PC-9 (cell line): ENCODE measurements at regions of chr5 and their contacts with region 1.

Region 1: DNA sequence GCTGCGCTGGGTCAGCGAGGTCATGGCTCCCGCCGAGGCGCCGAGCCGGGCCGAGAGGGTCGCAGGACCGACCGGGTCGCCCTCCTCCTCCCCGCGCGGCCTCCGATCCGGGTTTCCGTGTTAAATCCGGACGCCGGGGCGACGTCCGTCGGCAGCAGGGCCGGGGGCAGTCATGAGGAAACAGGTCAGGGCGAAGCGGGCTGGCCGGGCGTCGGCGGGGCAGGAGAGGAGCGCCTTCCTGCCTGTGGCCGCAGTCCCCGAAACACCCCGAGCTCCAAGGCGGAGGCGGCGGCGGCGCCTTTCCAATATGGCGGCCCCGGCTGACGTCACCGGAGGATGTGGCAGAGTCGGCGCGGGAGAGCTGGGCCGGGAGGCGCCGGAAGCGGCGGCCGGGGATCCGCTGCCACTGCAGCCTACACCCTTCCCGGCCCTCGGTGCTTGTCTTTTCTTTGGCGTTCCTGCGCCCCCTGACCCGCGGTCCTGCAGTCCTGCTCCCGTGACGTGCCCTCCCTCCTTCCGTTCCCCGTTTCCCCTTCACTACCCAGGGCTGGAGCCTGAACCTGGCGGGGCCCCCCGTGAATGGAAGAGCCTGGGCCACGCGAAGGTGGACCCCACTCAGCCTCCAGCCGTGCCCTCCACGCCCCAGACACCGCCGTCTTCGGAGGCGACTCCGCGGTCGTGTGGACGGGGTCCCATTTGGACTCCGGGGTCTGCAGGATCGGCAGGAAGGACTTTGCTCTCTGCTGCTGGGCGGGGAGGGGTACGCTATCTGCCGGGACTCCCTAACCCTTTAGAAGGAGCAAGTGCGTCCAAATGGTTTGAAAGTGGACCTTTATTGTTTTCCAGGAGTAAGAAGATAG is at the start of gene GOLPH3:
- DNase-seq: peak; percentile 84 to 98
- H3K4me3 ChIP-seq: peak within 1 kb of the TSS; percentile 93
- H3K27ac ChIP-seq: peak within 1 kb of the TSS; percentile 95
- H3K4me1 ChIP-seq: peaks cover 43% of the 10 kb centered on the region
- H3K27me3 ChIP-seq: no peaks in the 10 kb centered on the region
- CTCF ChIP-seq: no peak
- total RNA-seq, gene GOLPH3: 179 and 267 TPM in 2 replicates

Region 2: DNA sequence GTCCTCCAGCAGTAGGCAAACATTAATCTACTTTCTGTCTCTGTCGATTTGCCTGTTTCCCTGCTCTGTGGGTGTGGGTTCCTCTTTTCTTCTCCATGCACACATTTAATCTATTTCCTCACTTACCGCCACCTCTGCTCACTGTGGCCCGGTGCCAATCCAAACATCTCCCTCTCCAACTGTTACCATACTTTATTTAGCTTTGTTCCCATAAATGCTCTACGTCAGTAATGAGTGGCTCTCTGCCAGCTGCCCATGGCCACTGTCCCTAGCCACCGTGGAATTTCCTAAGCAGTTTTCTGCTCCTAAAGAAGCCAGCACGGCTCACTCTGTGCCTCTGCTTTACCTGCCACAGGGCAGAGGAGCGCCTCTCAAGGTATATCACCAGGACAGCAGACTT is 19.4 kb after region 1 on chr5:
- CTCF ChIA-PET with region 1: interaction called, 4 read pairs
- POLR2A ChIA-PET with region 1: interaction called, 21 read pairs
- intact Hi-C with region 1: loop called (anchors 1 kb)
- DNase-seq: peak; percentile 87 to 95
- H3K4me3 ChIP-seq: peak overlapping the region; percentile 1; the same call in 1 of the 2 replicates
- H3K27ac ChIP-seq: no peak overlapping the region
- H3K4me1 ChIP-seq: peaks cover 14% of the 10 kb centered on the region
- H3K27me3 ChIP-seq: no peaks in the 10 kb centered on the region
- CTCF ChIP-seq: no peak

Region 3: GRCh38 chr5:32223946-32224608 is 49.8 kb after region 1 on chr5:
- CTCF ChIA-PET with region 1: interaction called, 3 read pairs
- POLR2A ChIA-PET with region 1: interaction called, 13 read pairs
- intact Hi-C with region 1: loop called (anchors 1 kb)
- DNase-seq: peak; percentile 94 to 96
- H3K4me3 ChIP-seq: no peak overlapping the region
- H3K27ac ChIP-seq: peak overlapping the region; percentile 57
- H3K4me1 ChIP-seq: peaks cover 33% of the 10 kb centered on the region
- H3K27me3 ChIP-seq: no peaks in the 10 kb centered on the region
- CTCF ChIP-seq: no peak

Region 4: DNA sequence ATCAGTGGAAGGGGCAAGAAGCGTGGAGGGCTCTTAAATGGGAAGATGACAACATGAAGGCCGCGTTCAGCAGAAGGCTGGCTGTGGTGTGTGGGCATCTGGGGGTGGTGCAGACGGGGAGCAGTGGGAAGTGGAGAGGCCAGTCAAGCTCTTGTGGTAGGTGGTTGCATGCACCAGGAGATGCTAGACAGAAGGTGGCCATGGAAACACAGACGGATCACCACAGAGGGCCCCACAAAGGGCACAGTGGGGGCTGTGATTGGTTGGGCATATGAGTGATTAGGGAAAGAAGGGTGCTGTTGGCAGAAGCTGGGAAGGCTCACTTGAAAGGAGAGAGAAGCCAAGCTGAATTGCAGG is 123.8 kb after region 1 on chr5:
- CTCF ChIA-PET with region 1: no interaction called
- POLR2A ChIA-PET with region 1: interaction called, 14 read pairs
- intact Hi-C with region 1: no loop called
- DNase-seq: peak in 1 of 2 experiments; percentile 26
- H3K4me3 ChIP-seq: no peak overlapping the region
- H3K27ac ChIP-seq: no peak overlapping the region
- H3K4me1 ChIP-seq: no peaks in the 10 kb centered on the region
- H3K27me3 ChIP-seq: no peaks in the 10 kb centered on the region
- CTCF ChIP-seq: no peak

Region 5: GRCh38 chr5:32329308-32329834 is 155.1 kb after region 1 on chr5:
- CTCF ChIA-PET with region 1: interaction called, 3 read pairs
- POLR2A ChIA-PET with region 1: no interaction called
- intact Hi-C with region 1: loop called (anchors 2 kb)
- DNase-seq: peak; percentile 60 to 72
- H3K4me3 ChIP-seq: no peak overlapping the region
- H3K27ac ChIP-seq: no peak overlapping the region
- H3K4me1 ChIP-seq: peaks cover 14% of the 10 kb centered on the region
- H3K27me3 ChIP-seq: no peaks in the 10 kb centered on the region
- CTCF ChIP-seq: peak; percentile 83

Region 6: GRCh38 chr5:32444431-32445286 is 270.4 kb after region 1 on chr5 and contains the start of gene ZFR:
- CTCF ChIA-PET with region 1: no interaction called
- POLR2A ChIA-PET with region 1: interaction called, 12 read pairs
- intact Hi-C with region 1: loop called (anchors 5 kb)
- DNase-seq: peak; percentile 77 to 98
- H3K4me3 ChIP-seq: peak within 1 kb of the TSS; percentile 83
- H3K27ac ChIP-seq: peak within 1 kb of the TSS; percentile 61
- H3K4me1 ChIP-seq: peaks cover 40% of the 10 kb centered on the region
- H3K27me3 ChIP-seq: no peaks in the 10 kb centered on the region
- CTCF ChIP-seq: no peak
- total RNA-seq, gene ZFR: 51.8 and 69.2 TPM in 2 replicates